ENCODE measurements at regions of chr1 and their contacts with region 1.

Region 1: DNA sequence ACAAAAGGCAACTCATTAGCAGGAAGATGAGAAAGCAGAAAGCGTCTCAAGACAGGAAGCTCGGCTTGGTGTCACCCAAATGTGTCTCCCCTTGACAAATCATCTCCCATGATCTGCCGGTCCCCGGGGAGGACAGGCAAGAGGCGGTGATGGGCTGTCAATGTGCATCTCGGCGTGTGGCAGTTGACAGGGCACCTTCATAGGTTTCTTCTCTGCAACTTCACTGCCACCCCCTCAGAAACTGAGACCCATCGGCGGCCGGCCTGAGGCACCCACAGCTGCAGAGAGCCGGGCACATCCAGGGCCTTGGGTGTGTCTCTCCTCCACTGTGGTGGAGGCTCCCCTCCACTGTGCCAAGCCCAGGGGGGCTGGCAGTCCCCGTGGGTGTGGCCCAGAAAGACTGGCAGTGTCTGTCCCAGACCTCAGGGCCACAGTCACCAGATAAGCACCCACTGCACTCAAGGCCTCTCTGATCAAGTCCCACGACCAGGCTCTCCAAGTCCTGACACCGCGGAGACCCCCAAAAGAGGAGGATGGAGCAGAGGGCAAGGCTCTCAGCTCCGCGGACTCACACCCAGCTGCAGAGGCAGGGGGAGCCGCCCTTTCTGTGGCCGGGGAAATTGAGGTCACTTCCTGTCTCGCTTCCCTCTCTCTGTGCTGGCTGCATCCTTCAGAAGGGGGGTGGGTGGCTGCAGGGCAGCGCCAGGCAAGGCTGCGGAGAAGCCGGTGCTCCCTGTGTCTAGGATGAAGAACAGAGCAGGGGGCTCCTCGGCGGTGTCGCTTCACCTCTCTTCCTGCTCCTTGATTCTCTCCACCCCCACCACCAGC is 39.6 kb upstream of the LBR start:
- DNase-seq: peak; percentile 95
- ATAC-seq: peak; percentile 90
- H3K4me3 Mint-ChIP-seq: peak overlapping the region; percentile 84
- H3K27ac Mint-ChIP-seq: peak overlapping the region; percentile 99
- H3K4me1 Mint-ChIP-seq: peaks cover 50% of the 10 kb centered on the region
- H3K27me3 Mint-ChIP-seq: no peaks in the 10 kb centered on the region

Region 2: GRCh38 chr1:225428068-225428880 is 39.1 kb before region 1 on chr1:
- CTCF ChIA-PET with region 1: interaction called, 29 read pairs
- DNase-seq: peak; percentile 95
- ATAC-seq: peak; percentile 95
- H3K4me3 Mint-ChIP-seq: peak overlapping the region; percentile 96
- H3K27ac Mint-ChIP-seq: peak overlapping the region; percentile 98
- H3K4me1 Mint-ChIP-seq: peaks cover 43% of the 10 kb centered on the region
- H3K27me3 Mint-ChIP-seq: no peaks in the 10 kb centered on the region

Region 3: DNA sequence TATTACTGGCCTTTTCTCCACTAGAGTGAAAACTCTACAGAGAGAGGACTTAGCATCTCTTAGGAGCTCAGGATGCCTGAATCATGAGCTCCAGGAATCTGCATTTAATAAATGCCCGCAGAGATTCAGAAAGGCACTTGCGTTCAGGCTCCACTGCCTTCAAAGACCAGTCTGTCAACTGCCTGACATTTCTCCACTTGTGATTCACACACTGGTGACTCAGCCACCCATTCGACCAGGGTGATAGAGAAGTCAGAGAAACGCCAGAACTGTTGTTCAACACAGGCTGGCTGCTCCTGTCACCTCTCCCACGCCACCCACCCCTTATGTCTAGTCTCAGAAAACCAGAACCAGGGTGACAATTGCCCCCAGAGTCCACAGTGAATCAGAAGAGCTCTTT is 12.7 kb before region 1 on chr1:
- CTCF ChIA-PET with region 1: interaction called, 17 read pairs
- DNase-seq: peak; percentile 80
- ATAC-seq: peak; percentile 91
- H3K4me3 Mint-ChIP-seq: no peak overlapping the region
- H3K27ac Mint-ChIP-seq: peak overlapping the region; percentile 83
- H3K4me1 Mint-ChIP-seq: peaks cover 51% of the 10 kb centered on the region
- H3K27me3 Mint-ChIP-seq: no peaks in the 10 kb centered on the region

Measured in activated CD8-positive, alpha-beta memory T cell treated with anti-CD3 and anti-CD28 coated beads, Interleukin-2, amount 10 ng/mL, durations not matched to agents 7 days and 5 days (primary cell).